SK-N-SH (cell line): ENCODE measurements at regions of chrX and their contacts with region 1.

Region 1: DNA sequence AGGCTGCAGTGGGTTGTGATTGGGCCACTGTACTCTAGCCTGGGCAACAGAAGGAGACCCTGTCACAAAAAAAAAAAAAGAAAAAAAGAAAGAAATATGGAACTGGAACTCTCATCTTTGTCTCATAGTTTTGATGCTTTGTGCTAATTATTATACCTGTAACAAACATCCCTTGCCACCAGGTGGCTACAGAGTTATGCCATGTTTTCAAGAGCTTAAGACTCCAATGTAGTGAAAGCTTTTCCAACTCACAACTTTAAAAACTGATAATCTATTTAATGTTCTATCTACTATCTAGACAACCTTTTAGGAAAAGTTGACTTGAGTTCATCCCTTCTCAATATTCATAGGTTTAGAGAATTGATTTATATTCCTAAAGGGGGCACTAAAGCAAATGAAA is 42.4 kb downstream of the HTR2C start:
- DNase-seq: peak; percentile 12
- H3K4me3 ChIP-seq: no peak overlapping the region
- H3K27ac ChIP-seq: no peak overlapping the region
- H3K4me1 ChIP-seq: no peaks in the 10 kb centered on the region
- H3K27me3 ChIP-seq: no peaks in the 10 kb centered on the region
- CTCF ChIP-seq: peak; percentile 66
- EP300 ChIP-seq: no peak
- RAD21 ChIP-seq: peak; percentile 54

Region 2: DNA sequence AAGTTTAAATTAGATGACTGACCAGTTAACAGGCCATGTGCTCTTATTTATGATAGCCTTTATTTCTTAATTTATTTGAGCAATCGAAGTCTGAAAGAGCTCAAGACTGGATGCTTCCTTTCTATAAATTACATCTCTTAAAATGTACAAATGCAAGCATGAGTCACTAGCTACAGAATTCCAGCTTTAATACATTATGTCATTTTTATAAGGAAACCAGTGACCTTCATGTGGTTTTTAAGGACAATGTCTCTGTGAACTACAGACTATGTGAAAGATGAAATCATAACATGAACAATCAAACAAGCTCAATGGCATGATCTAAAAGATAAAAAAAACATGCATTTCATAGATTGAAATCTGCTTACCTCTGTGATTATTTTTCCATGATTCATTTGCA is 27.0 kb before region 1 on chrX:
- CTCF ChIA-PET with region 1: no interaction called
- POLR2A ChIA-PET with region 1: no interaction called
- DNase-seq: no peak
- H3K4me3 ChIP-seq: no peak overlapping the region
- H3K27ac ChIP-seq: no peak overlapping the region
- H3K4me1 ChIP-seq: no peaks in the 10 kb centered on the region; a peak in 1 of 4 replicates
- H3K27me3 ChIP-seq: no peaks in the 10 kb centered on the region
- CTCF ChIP-seq: no peak
- EP300 ChIP-seq: no peak
- RAD21 ChIP-seq: no peak

Region 3: GRCh38 chrX:114611018-114611619 is 15.2 kb before region 1 on chrX:
- CTCF ChIA-PET with region 1: interaction called, 25 read pairs
- POLR2A ChIA-PET with region 1: no interaction called
- DNase-seq: peak; percentile 46
- H3K4me3 ChIP-seq: no peak overlapping the region
- H3K27ac ChIP-seq: no peak overlapping the region
- H3K4me1 ChIP-seq: no peaks in the 10 kb centered on the region
- H3K27me3 ChIP-seq: no peaks in the 10 kb centered on the region
- CTCF ChIP-seq: peak; percentile 90
- EP300 ChIP-seq: no peak
- RAD21 ChIP-seq: peak; percentile 61